ENCODE measurements at regions of chr7 and their contacts with region 1.

Region 1: GRCh38 chr7:127514499-127514898 is 70.9 kb downstream of the GCC1 start:
- DNase-seq: peak; percentile 51
- H3K4me3 ChIP-seq: no peak overlapping the region
- H3K27ac ChIP-seq: no peak overlapping the region
- H3K4me1 ChIP-seq: no peaks in the 10 kb centered on the region
- H3K27me3 ChIP-seq: peaks cover 10% of the 10 kb centered on the region
- CTCF ChIP-seq: peak; percentile 54

Region 2: GRCh38 chr7:126803060-126803665 is 711.3 kb before region 1 on chr7:
- CTCF ChIA-PET with region 1: no interaction called
- POLR2A ChIA-PET with region 1: no interaction called
- intact Hi-C with region 1: loop called (anchors 10 kb)
- DNase-seq: peak; percentile 76
- H3K4me3 ChIP-seq: no peak overlapping the region
- H3K27ac ChIP-seq: no peak overlapping the region
- H3K4me1 ChIP-seq: no peaks in the 10 kb centered on the region
- H3K27me3 ChIP-seq: no peaks in the 10 kb centered on the region
- CTCF ChIP-seq: peak; percentile 79

Region 3: DNA sequence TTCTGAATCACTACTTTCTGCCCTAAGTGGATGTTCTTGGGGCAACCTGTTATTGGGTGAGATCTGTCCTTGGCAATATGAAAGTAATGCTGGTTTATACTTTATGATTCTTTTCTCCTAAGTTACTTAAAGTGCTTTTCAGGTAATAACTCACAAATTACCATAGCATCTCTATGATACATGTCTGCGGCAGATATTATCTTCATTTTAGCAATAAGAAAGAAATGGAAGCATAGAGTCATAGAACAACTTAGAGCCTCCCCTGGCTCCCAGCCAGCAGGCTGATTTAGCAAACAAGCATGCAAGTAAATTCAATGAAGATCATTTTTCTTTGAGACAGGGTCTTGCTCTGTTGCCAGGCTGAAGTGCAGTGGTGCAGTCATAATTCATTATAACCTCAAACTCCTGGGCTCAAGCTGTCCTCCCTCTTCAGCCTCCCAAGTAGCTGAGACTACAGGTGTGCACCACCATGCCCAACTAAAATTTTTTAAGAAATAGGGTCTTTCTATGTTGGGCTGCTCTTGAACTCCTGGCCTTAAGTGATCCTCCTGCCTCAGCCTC is 223.6 kb before region 1 on chr7:
- CTCF ChIA-PET with region 1: no interaction called
- POLR2A ChIA-PET with region 1: interaction called, 18 read pairs
- intact Hi-C with region 1: no loop called
- DNase-seq: no peak
- H3K4me3 ChIP-seq: no peak overlapping the region
- H3K27ac ChIP-seq: no peak overlapping the region
- H3K4me1 ChIP-seq: no peaks in the 10 kb centered on the region
- H3K27me3 ChIP-seq: no peaks in the 10 kb centered on the region
- CTCF ChIP-seq: no peak

Region 4: GRCh38 chr7:127347567-127348246 is 166.8 kb before region 1 on chr7:
- CTCF ChIA-PET with region 1: interaction called, 3 read pairs
- POLR2A ChIA-PET with region 1: no interaction called
- intact Hi-C with region 1: loop called (anchors 2 kb)
- DNase-seq: peak; percentile 86
- H3K4me3 ChIP-seq: peak overlapping the region; percentile 37
- H3K27ac ChIP-seq: no peak overlapping the region
- H3K4me1 ChIP-seq: no peaks in the 10 kb centered on the region
- H3K27me3 ChIP-seq: no peaks in the 10 kb centered on the region
- CTCF ChIP-seq: no peak; the same call in none of the 2 replicates

Region 5: DNA sequence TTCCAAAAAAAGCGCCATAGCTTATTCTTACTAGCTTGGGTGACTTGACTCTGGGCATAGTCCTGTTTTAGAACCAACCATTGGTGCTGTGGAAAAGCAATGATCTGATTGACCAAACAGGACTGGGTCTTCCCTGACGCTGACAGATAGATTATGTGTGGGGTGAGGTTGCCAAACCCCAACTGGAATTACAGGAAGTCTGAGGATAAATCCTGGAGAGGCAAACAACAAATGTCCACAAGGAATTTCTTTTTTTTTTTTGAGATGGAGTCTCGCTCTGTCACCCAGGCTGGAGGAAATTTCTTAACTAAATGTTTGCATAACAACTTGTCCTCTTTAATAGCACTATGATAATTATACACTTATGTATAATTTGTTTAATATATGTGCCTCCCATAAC is 51.7 kb after region 1 on chr7:
- CTCF ChIA-PET with region 1: no interaction called
- POLR2A ChIA-PET with region 1: no interaction called
- intact Hi-C with region 1: no loop called
- DNase-seq: no peak
- H3K4me3 ChIP-seq: no peak overlapping the region
- H3K27ac ChIP-seq: no peak overlapping the region
- H3K4me1 ChIP-seq: no peaks in the 10 kb centered on the region
- H3K27me3 ChIP-seq: no peaks in the 10 kb centered on the region
- CTCF ChIP-seq: no peak

Measured in A673 (cell line).